ENCODE measurements at regions of chr9 and their contacts with region 1.

Region 1: GRCh38 chr9:36328798-36329411 is 70.7 kb upstream of the GNE start:
- DNase-seq: peak in 1 of 5 donors; percentile 47
- H3K4me3 ChIP-seq: no peak overlapping the region
- H3K27ac ChIP-seq: no peak overlapping the region
- H3K4me1 ChIP-seq: no peaks in the 10 kb centered on the region
- H3K27me3 ChIP-seq: no peaks in the 10 kb centered on the region
- CTCF ChIP-seq: peak; percentile 70 to 76 (median 75)
- EP300 ChIP-seq: no peak
- POLR2A ChIP-seq: no peak

Region 2: DNA sequence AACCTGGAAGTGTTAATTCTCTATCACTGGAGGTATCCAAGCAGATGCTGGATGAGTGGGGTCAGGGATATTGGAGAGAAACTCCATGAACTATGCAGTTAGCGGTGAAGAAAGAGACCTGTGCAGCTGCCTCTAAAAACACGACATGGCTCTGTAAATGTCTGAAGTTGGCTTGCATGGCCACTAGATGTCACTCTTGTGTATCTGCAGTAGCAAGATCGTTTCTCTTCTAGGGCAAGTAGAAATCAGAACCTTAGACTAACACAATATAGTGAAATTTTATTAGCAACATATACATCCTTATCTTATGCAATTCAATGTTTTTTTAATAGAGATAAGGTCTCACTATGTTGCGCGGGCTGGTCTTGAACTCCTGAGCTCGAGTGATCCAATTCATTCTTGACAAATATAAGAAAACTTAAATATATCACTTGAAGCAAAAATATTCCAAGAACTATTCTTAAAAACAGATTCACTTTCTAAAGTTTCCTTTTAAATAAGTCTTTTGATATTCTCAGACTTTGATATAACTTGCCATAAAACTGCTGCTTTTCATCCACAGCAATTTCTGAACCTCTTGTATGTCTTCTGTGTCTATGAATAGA is 373.9 kb before region 1 on chr9:
- intact Hi-C with region 1: loop called in 3 of 4 experiments (anchors 5 kb)
- DNase-seq: peak in 2 of 5 donors; percentile 25 to 66
- H3K4me3 ChIP-seq: no peak overlapping the region
- H3K27ac ChIP-seq: no peak overlapping the region
- H3K4me1 ChIP-seq: no peaks in the 10 kb centered on the region
- H3K27me3 ChIP-seq: no peaks in the 10 kb centered on the region
- CTCF ChIP-seq: peak; percentile 45 to 73 (median 65)
- EP300 ChIP-seq: no peak
- POLR2A ChIP-seq: no peak

Region 3: GRCh38 chr9:35962126-35962906 is 366.6 kb before region 1 on chr9:
- intact Hi-C with region 1: loop called in 3 of 4 experiments (anchors 5 kb)
- DNase-seq: no peak
- H3K4me3 ChIP-seq: no peak overlapping the region
- H3K27ac ChIP-seq: no peak overlapping the region
- H3K4me1 ChIP-seq: no peaks in the 10 kb centered on the region
- H3K27me3 ChIP-seq: no peaks in the 10 kb centered on the region
- CTCF ChIP-seq: no peak
- EP300 ChIP-seq: no peak
- POLR2A ChIP-seq: no peak

Region 4: GRCh38 chr9:36166101-36166927 is 162.6 kb before region 1 on chr9:
- intact Hi-C with region 1: loop called in 1 of 4 experiments (anchors 10 kb)
- DNase-seq: peak; percentile 78 to 93 (median 84)
- H3K4me3 ChIP-seq: peak overlapping the region; percentile 45
- H3K27ac ChIP-seq: peak overlapping the region in 1 of 2 donors; percentile 39
- H3K4me1 ChIP-seq: peaks cover 5% of the 10 kb centered on the region
- H3K27me3 ChIP-seq: no peaks in the 10 kb centered on the region
- CTCF ChIP-seq: peak; percentile 93 to 94 (median 94)
- EP300 ChIP-seq: no peak
- POLR2A ChIP-seq: no peak

Region 5: DNA sequence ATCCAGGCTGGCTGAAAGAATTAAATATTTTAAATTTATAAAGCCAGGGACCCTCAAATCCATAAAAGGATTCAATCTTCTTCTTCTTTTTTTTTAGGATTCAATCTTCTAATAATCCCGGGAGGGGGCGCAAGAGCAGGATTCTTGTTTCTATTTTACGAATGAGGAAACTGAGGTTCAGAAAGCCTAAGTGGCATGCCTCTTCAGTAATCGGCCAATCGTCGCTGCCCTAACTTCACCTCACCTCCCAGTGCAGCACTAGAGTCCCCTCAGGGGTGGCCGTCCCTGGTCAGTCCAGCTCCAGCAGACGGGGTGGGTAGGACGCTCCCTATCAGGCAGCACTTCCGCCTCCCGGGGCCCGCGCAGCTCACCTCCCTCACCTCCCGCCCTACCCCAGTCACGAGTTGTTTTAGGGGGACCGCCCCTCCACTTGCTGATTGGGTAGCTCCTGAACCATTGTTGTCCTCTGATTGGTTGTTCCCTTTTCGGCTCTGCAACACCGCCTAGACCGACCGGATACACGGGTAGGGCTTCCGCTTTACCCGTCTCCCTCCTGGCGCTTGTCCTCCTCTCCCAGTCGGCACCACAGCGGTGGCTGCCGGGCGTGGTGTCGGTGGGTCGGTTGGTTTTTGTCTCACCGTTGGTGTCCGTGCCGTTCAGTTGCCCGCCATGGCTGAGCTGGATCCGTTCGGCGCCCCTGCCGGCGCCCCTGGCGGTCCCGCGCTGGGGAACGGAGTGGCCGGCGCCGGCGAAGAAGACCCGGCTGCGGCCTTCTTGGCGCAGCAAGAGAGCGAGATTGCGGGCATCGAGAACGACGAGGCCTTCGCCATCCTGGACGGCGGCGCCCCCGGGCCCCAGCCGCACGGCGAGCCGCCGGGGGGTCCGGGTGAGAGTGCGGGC is 138.3 kb before region 1 on chr9 and contains the start of gene CLTA:
- intact Hi-C with region 1: loop called in 1 of 4 experiments (anchors 10 kb)
- DNase-seq: peak; percentile 92 to 95 (median 93)
- H3K4me3 ChIP-seq: peak within 1 kb of the TSS; percentile 79
- H3K27ac ChIP-seq: peak within 1 kb of the TSS; percentile 74 to 75
- H3K4me1 ChIP-seq: peaks cover 16% of the 10 kb centered on the region
- H3K27me3 ChIP-seq: no peaks in the 10 kb centered on the region
- CTCF ChIP-seq: peak; percentile 40 to 66 (median 62)
- EP300 ChIP-seq: peak; percentile 32
- POLR2A ChIP-seq: peak; percentile 58
- total RNA-seq, gene CLTA: 170 to 223 (median 202) TPM

Region 6: GRCh38 chr9:36237230-36237629 is 91.7 kb before region 1 on chr9:
- intact Hi-C with region 1: no loop called
- DNase-seq: no peak
- H3K4me3 ChIP-seq: no peak overlapping the region
- H3K27ac ChIP-seq: no peak overlapping the region
- H3K4me1 ChIP-seq: no peaks in the 10 kb centered on the region
- H3K27me3 ChIP-seq: no peaks in the 10 kb centered on the region
- CTCF ChIP-seq: no peak
- EP300 ChIP-seq: no peak
- POLR2A ChIP-seq: no peak

Region 7: GRCh38 chr9:36306471-36307306 is 22.2 kb before region 1 on chr9:
- intact Hi-C with region 1: no loop called
- DNase-seq: no peak
- H3K4me3 ChIP-seq: no peak overlapping the region
- H3K27ac ChIP-seq: no peak overlapping the region
- H3K4me1 ChIP-seq: peaks cover 1% of the 10 kb centered on the region
- H3K27me3 ChIP-seq: no peaks in the 10 kb centered on the region
- CTCF ChIP-seq: no peak
- EP300 ChIP-seq: no peak
- POLR2A ChIP-seq: no peak